ENCODE measurements at regions of chr9 and their contacts with region 1.

Region 1: GRCh38 chr9:68895741-68896478 is 118.0 kb downstream of the PRKACG start:
- DNase-seq: peak; percentile 37
- ATAC-seq: peak; percentile 93
- H3K4me3 ChIP-seq: peak overlapping the region in 3 of 5 experiments; percentile 3 to 55 (median 28)
- H3K4me3 Mint-ChIP-seq: peak overlapping the region; percentile 74
- H3K27ac ChIP-seq: peak overlapping the region; percentile 39 to 68
- H3K27ac Mint-ChIP-seq: peak overlapping the region; percentile 86
- H3K4me1 ChIP-seq: peaks cover 31 to 39% of the 10 kb centered on the region in 2 donors
- H3K4me1 Mint-ChIP-seq: peaks cover 60% of the 10 kb centered on the region
- H3K27me3 ChIP-seq: no peaks in the 10 kb centered on the region
- H3K27me3 Mint-ChIP-seq: no peaks in the 10 kb centered on the region
- CTCF ChIP-seq: no peak

Region 2: GRCh38 chr9:68669218-68669617 is 226.7 kb before region 1 on chr9:
- CTCF ChIA-PET with region 1: no interaction called
- POLR2A ChIA-PET with region 1: no interaction called
- intact Hi-C with region 1: no loop called
- DNase-seq: no peak
- ATAC-seq: no peak
- H3K4me3 ChIP-seq: no peak overlapping the region
- H3K4me3 Mint-ChIP-seq: no peak overlapping the region
- H3K27ac ChIP-seq: no peak overlapping the region
- H3K27ac Mint-ChIP-seq: no peak overlapping the region
- H3K4me1 ChIP-seq: peaks cover 2 to 6% of the 10 kb centered on the region in 2 donors
- H3K4me1 Mint-ChIP-seq: peaks cover 5% of the 10 kb centered on the region
- H3K27me3 ChIP-seq: no peaks in the 10 kb centered on the region
- H3K27me3 Mint-ChIP-seq: no peaks in the 10 kb centered on the region
- CTCF ChIP-seq: no peak

Region 3: GRCh38 chr9:68949271-68950000 is 53.5 kb after region 1 on chr9:
- CTCF ChIA-PET with region 1: interaction called, 3 read pairs
- POLR2A ChIA-PET with region 1: no interaction called
- intact Hi-C with region 1: loop called (anchors 5 kb)
- DNase-seq: peak; percentile 46
- ATAC-seq: peak; percentile 31
- H3K4me3 ChIP-seq: no peak overlapping the region
- H3K4me3 Mint-ChIP-seq: no peak overlapping the region
- H3K27ac ChIP-seq: no peak overlapping the region
- H3K27ac Mint-ChIP-seq: no peak overlapping the region
- H3K4me1 ChIP-seq: peaks cover 7 to 9% of the 10 kb centered on the region in 2 donors
- H3K4me1 Mint-ChIP-seq: peaks cover 26% of the 10 kb centered on the region
- H3K27me3 ChIP-seq: no peaks in the 10 kb centered on the region
- H3K27me3 Mint-ChIP-seq: no peaks in the 10 kb centered on the region
- CTCF ChIP-seq: peak; percentile 17